Psoas muscle (tissue), 8 donors: ENCODE measurements at regions of chr5 and their contacts with region 1.

Region 1: GRCh38 chr5:180071531-180072255 is at the start of gene RNF130:
- DNase-seq: peak; percentile 96 to 97
- ATAC-seq: peak; percentile 95 to 97 (median 96)
- H3K4me3 ChIP-seq: peak within 1 kb of the TSS; percentile 93
- H3K27ac ChIP-seq: peak within 1 kb of the TSS; percentile 95
- H3K4me1 ChIP-seq: peaks cover 19% of the 10 kb centered on the region
- H3K27me3 ChIP-seq: no peaks in the 10 kb centered on the region
- CTCF ChIP-seq: no peak
- total RNA-seq, gene RNF130: 34.1 to 41.1 (median 37.4) TPM

Region 2: GRCh38 chr5:179559284-179560252 is 512.1 kb before region 1 on chr5:
- intact Hi-C with region 1: loop called in 1 of 2 experiments (anchors 10 kb)
- DNase-seq: peak; percentile 97 to 98
- ATAC-seq: peak; percentile 99 to 100 (median 99)
- H3K4me3 ChIP-seq: peak overlapping the region; percentile 68
- H3K27ac ChIP-seq: peak overlapping the region; percentile 77
- H3K4me1 ChIP-seq: peaks cover 13% of the 10 kb centered on the region
- H3K27me3 ChIP-seq: no peaks in the 10 kb centered on the region
- CTCF ChIP-seq: no peak